Adrenal gland (tissue), 19 donors: ENCODE measurements at regions of chr17 and their contacts with region 1.

Region 1: DNA sequence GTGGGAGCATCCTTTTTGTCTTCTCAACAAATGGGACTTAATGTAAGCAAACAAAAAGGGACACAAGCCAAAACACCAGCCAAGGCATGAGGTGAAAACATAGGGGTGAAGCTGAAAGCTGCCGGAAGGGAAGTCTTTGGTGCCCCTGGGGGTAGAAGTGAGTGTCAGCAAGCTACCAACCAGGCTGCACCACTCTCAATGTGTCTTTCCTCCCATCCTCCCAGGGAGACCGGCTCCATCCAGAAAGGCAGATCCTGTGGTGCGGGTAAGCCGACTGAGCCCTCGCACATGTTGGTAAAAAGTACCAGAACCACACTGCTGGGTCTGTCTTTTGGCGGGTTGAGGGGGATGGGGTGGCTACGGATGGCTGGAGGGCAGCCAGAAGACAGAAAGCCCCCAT is 52.0 kb upstream of the SREBF1 start:
- DNase-seq: no peak
- H3K4me3 ChIP-seq: no peak overlapping the region
- H3K27ac ChIP-seq: no peak overlapping the region
- H3K4me1 ChIP-seq: no peaks in the 10 kb centered on the region
- H3K27me3 ChIP-seq: no peaks in the 10 kb centered on the region
- CTCF ChIP-seq: no peak
- POLR2A ChIP-seq: no peak

Region 2: GRCh38 chr17:17712268-17712924 is 176.4 kb before region 1 on chr17:
- intact Hi-C with region 1: no loop called
- DNase-seq: no peak
- H3K4me3 ChIP-seq: no peak overlapping the region
- H3K27ac ChIP-seq: peak overlapping the region in 2 of 5 donors; percentile 52 to 89
- H3K4me1 ChIP-seq: peaks cover 18 to 42% of the 10 kb centered on the region in 2 donors
- H3K27me3 ChIP-seq: no peaks in the 10 kb centered on the region
- CTCF ChIP-seq: no peak
- POLR2A ChIP-seq: no peak

Region 3: DNA sequence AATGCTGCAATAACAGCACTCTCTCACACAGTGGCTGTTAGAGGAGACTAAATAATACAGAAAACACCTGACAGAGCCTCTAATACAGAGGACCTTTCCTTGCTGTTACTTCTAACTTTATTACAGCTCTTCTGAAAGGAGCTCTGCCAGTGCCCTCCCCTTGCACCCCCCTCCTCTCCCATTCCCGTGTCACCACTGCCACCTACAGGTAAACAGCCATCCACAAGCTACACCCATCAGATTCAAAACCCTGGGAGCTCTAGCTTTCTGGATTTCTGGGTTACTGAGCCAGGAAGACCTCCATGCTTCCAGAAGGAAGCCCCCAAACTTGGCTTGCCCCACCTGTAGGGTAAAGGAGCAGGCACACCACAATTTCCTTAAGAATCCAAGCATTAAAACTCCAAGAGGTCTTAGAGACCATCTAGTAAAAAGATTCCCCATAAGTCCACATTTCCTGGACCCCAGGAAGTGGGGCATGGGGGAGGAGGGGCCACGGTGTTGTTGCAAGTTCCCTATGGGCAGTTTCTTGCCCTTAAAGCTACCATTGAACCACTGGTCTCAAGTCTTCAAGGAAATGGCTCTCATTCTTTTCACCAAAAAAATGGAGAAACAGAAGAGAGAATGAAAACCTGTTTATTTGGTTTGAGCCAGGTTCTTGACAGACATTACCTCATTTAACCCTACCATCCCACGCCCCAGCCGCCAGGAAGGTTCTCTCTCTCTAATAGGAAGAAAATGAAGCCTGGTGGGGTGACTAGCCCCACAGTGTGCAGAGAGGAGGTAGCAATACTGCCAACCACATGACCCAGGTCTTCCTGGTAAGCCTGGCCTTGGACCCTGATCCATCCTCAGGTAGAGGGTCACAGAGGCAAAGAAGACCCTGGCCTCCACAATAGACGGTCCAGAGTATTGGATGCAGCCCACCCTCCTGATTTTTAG is 30.6 kb after region 1 on chr17:
- intact Hi-C with region 1: no loop called
- DNase-seq: peak; percentile 80 to 94 (median 84)
- H3K4me3 ChIP-seq: no peak overlapping the region
- H3K27ac ChIP-seq: peak overlapping the region in 3 of 5 donors; percentile 8 to 46 (median 14)
- H3K4me1 ChIP-seq: peaks cover 24 to 46% of the 10 kb centered on the region in 2 donors
- H3K27me3 ChIP-seq: no peaks in the 10 kb centered on the region
- CTCF ChIP-seq: peak; percentile 43 to 85 (median 79)
- POLR2A ChIP-seq: no peak

Region 4: DNA sequence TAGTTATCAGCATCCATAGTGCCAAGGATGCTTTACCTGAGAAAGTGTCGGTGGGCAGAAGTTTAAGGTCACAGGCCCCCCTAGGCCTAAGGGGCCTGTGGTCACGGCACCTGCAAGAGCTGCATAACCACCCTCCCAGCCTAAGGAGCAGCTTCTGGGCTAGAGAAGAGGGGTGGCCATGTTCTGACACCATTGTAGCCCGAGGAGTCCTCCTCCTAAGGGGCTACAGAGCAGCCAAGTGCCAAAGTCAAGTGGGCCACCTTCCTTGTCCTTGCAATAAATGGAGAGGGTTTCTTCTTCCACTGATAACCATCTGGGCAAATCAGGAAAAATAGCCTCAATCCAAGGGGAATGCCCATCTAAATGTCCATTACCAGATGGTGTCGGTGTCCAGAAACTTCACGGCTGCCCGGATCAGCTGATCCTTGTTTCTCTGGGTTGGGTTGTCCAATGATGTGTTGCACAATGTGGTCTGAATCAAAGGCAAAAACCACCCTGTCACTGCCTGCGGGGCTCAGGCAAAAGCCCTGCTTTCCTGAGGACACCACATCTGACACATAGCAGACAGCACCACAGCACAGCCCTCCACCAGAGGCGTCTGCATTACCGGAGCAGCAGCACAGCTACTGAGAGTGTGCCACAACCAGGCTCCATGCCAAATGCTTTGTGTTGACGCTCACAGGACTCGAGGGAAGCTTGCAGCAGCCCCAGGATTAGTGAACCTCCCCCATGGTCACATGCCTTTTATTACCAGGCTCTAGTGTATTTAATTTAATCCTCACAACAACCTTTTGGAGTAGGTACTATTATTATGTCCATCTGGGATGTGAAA is 137.3 kb after region 1 on chr17:
- intact Hi-C with region 1: loop called in 1 of 2 experiments (anchors 10 kb)
- DNase-seq: peak in 2 of 7 donors; percentile 42 to 92
- H3K4me3 ChIP-seq: no peak overlapping the region
- H3K27ac ChIP-seq: peak overlapping the region in 1 of 5 donors; percentile 55
- H3K4me1 ChIP-seq: no peaks in the 10 kb centered on the region
- H3K27me3 ChIP-seq: no peaks in the 10 kb centered on the region
- CTCF ChIP-seq: no peak
- POLR2A ChIP-seq: no peak